ENCODE measurements at regions of chr16 and their contacts with region 1.

Region 1: DNA sequence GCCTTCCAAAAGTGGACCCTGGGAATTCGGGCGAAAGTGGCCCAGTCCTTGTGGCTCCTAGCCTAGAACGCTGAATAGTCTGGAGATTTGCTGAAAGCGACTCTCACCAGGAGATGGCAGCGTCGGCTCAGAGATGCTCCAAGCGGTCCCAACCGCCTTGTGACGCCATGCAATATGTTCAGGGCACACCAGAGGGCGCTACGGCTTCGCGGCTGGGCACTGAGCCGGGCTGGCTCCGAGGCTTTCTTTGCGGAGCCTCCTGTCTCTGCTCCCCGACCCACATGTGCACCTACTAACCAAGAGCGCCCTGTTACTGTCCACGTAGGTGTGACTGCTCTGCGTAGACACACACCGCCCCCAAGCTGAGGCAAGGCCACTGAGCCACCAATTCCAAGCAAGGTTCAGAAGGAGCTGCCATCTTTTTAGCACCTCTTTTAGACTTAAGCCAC is 36.9 kb downstream of the SYCE1L start:
- DNase-seq: peak; percentile 78
- H3K4me3 Mint-ChIP-seq: peak overlapping the region; percentile 3
- H3K27ac Mint-ChIP-seq: no peak overlapping the region
- H3K4me1 Mint-ChIP-seq: peaks cover 8% of the 10 kb centered on the region
- H3K27me3 Mint-ChIP-seq: peaks cover 8% of the 10 kb centered on the region

Region 2: DNA sequence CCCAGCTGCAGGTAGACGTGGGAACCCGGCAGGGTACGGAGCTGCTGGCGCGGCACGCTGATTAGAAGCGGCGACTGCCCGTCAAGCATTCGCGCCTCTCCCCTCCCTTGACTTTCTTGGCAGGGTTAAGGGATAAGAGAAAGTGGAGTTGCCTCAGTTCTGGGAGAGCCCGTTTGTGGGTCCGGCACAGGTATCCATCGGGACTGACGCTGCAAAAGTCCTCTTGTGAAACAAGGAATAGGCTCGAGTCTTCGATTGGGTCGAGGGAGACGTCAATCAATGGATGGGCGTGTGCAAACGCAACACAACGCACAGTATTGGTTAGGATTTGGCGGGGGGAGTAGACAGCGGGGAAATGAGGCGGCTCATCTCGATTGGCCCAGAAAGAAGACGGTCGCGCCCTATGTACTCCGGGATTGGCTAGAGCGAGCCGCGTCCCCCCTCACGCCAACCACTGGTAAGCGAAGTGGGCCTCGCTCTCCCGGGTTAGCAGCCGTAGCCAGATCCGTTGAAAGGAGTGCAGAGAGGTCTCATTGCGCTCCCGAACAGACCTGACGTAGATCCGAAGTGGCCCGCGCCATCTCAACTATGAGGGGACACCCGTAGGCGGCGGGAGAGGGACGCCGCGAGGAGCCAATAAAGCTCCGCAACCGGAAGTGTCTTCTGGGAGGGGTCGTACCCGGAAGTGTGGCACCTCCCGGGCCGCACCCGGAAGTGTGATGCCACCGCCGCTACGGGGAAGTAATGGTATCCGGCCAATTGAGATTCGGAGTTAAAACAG is 45.4 kb before region 1 on chr16 and contains the start of gene MON1B:
- intact Hi-C with region 1: no loop called
- DNase-seq: peak; percentile 94
- H3K4me3 Mint-ChIP-seq: peak within 1 kb of the TSS; percentile 97
- H3K27ac Mint-ChIP-seq: peak within 1 kb of the TSS; percentile 100
- H3K4me1 Mint-ChIP-seq: peaks cover 28% of the 10 kb centered on the region
- H3K27me3 Mint-ChIP-seq: peaks cover 3% of the 10 kb centered on the region
- total RNA-seq, gene MON1B: 69.2 and 69.6 TPM in 2 replicates

Region 3: GRCh38 chr16:77376358-77376757 is 140.3 kb after region 1 on chr16:
- intact Hi-C with region 1: loop called (anchors 1 kb)
- DNase-seq: no peak
- H3K4me3 Mint-ChIP-seq: no peak overlapping the region
- H3K27ac Mint-ChIP-seq: no peak overlapping the region
- H3K4me1 Mint-ChIP-seq: no peaks in the 10 kb centered on the region
- H3K27me3 Mint-ChIP-seq: no peaks in the 10 kb centered on the region

Region 4: GRCh38 chr16:77584205-77584859 is 348.2 kb after region 1 on chr16:
- intact Hi-C with region 1: loop called (anchors 1 kb)
- DNase-seq: peak; percentile 11
- H3K4me3 Mint-ChIP-seq: no peak overlapping the region
- H3K27ac Mint-ChIP-seq: no peak overlapping the region
- H3K4me1 Mint-ChIP-seq: peaks cover 16% of the 10 kb centered on the region
- H3K27me3 Mint-ChIP-seq: peaks cover 2% of the 10 kb centered on the region

Measured in activated T-helper 2 cell treated with anti-CD3 and anti-CD28 coated beads, Interferon-gamma antibody, Interleukin-2, Interleukin-4, amounts not matched to agents 10 μg/mL and 5 μg/mL and 100 μg/mL, durations not matched to agents 14 hours and 24 hours and 36 hours (primary cell).